CD8-positive, alpha-beta memory T cell (primary cell): ENCODE measurements at regions of chr1 and their contacts with region 1.

Region 1: GRCh38 chr1:39727221-39727931 is 11.3 kb upstream of the PPIE start:
- DNase-seq: no peak
- H3K4me3 ChIP-seq: no peak overlapping the region
- H3K4me3 Mint-ChIP-seq: peak overlapping the region in 2 of 7 donors; percentile 45 to 58
- H3K27ac ChIP-seq: no peak overlapping the region
- H3K27ac Mint-ChIP-seq: no peak overlapping the region
- H3K4me1 ChIP-seq: no peaks in the 10 kb centered on the region
- H3K4me1 Mint-ChIP-seq: peaks cover 0 to 4% (median 2%) of the 10 kb centered on the region in 3 donors
- H3K27me3 ChIP-seq: peaks cover 22% of the 10 kb centered on the region
- H3K27me3 Mint-ChIP-seq: peaks cover 41 to 66% of the 10 kb centered on the region in 2 donors

Region 2: GRCh38 chr1:39575191-39576015 is 152.0 kb before region 1 on chr1:
- CTCF ChIA-PET with region 1: no interaction called
- POLR2A ChIA-PET with region 1: no interaction called
- DNase-seq: peak; percentile 42 to 68 (median 62)
- H3K4me3 ChIP-seq: peak overlapping the region; percentile 49
- H3K4me3 Mint-ChIP-seq: peak overlapping the region; percentile 89 to 96 (median 92)
- H3K27ac ChIP-seq: peak overlapping the region; percentile 66
- H3K27ac Mint-ChIP-seq: peak overlapping the region; percentile 80 to 99 (median 94)
- H3K4me1 ChIP-seq: peaks cover 22% of the 10 kb centered on the region
- H3K4me1 Mint-ChIP-seq: peaks cover 33 to 45% (median 38%) of the 10 kb centered on the region in 3 donors
- H3K27me3 ChIP-seq: no peaks in the 10 kb centered on the region
- H3K27me3 Mint-ChIP-seq: no peaks in the 10 kb centered on the region

Region 3: DNA sequence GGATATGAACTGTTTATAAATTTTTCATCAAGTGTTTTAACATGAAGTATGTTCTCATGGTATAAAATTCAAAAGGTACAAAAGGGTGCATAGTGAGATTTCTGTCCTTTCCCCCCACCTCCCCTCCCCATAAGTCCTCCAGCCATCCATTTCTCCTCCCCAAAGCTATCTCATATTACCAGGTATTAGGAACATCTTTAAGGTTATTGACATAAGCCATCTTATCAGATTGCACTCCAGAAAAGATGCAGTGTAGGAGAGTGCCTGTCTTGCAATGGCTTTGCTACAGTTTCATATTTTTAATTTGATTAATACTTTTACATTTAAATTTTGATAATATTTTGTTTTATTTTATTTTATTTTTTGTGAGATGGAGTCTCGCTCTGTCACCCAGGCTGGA is 22.6 kb before region 1 on chr1:
- CTCF ChIA-PET with region 1: no interaction called
- POLR2A ChIA-PET with region 1: interaction called, 10 read pairs
- DNase-seq: no peak
- H3K4me3 ChIP-seq: no peak overlapping the region
- H3K4me3 Mint-ChIP-seq: no peak overlapping the region
- H3K27ac ChIP-seq: no peak overlapping the region
- H3K27ac Mint-ChIP-seq: no peak overlapping the region
- H3K4me1 ChIP-seq: no peaks in the 10 kb centered on the region
- H3K4me1 Mint-ChIP-seq: no peaks in the 10 kb centered on the region
- H3K27me3 ChIP-seq: no peaks in the 10 kb centered on the region
- H3K27me3 Mint-ChIP-seq: peaks cover 3 to 20% of the 10 kb centered on the region in 2 donors